CD4-positive, alpha-beta T cell (primary cell): ENCODE measurements at regions of chr4 and their contacts with region 1.

Region 1: GRCh38 chr4:183430317-183430993 is 14.0 kb upstream of the CDKN2AIP start:
- DNase-seq: peak in 12 of 14 experiments; percentile 10 to 63 (median 34)
- ATAC-seq: peak; percentile 93
- H3K4me3 ChIP-seq: no peak overlapping the region
- H3K4me3 Mint-ChIP-seq: peak overlapping the region; percentile 72
- H3K27ac ChIP-seq: peak overlapping the region in 1 of 2 donors; percentile 59
- H3K27ac Mint-ChIP-seq: peak overlapping the region; percentile 81
- H3K4me1 ChIP-seq: peaks cover 38% of the 10 kb centered on the region
- H3K4me1 Mint-ChIP-seq: peaks cover 42% of the 10 kb centered on the region
- H3K27me3 ChIP-seq: no peaks in the 10 kb centered on the region
- H3K27me3 Mint-ChIP-seq: no peaks in the 10 kb centered on the region
- CTCF ChIP-seq: no peak

Region 2: GRCh38 chr4:183444214-183445066 is 14.0 kb after region 1 on chr4 and contains the start of gene CDKN2AIP:
- CTCF ChIA-PET with region 1: no interaction called
- POLR2A ChIA-PET with region 1: interaction called, 110 read pairs
- intact Hi-C with region 1: loop called in 1 of 2 experiments (anchors 2 kb)
- DNase-seq: peak; percentile 89 to 98 (median 94)
- ATAC-seq: peak; percentile 82
- H3K4me3 ChIP-seq: peak within 1 kb of the TSS; percentile 94
- H3K4me3 Mint-ChIP-seq: peak within 1 kb of the TSS; percentile 98
- H3K27ac ChIP-seq: peak within 1 kb of the TSS; percentile 91
- H3K27ac Mint-ChIP-seq: peak within 1 kb of the TSS; percentile 96
- H3K4me1 ChIP-seq: peaks cover 26% of the 10 kb centered on the region
- H3K4me1 Mint-ChIP-seq: peaks cover 55% of the 10 kb centered on the region
- H3K27me3 ChIP-seq: no peaks in the 10 kb centered on the region
- H3K27me3 Mint-ChIP-seq: no peaks in the 10 kb centered on the region
- CTCF ChIP-seq: no peak
- total RNA-seq, gene CDKN2AIP: 55.7 to 56.9 TPM